ENCODE measurements at regions of chr3 and their contacts with region 1.

Region 1: DNA sequence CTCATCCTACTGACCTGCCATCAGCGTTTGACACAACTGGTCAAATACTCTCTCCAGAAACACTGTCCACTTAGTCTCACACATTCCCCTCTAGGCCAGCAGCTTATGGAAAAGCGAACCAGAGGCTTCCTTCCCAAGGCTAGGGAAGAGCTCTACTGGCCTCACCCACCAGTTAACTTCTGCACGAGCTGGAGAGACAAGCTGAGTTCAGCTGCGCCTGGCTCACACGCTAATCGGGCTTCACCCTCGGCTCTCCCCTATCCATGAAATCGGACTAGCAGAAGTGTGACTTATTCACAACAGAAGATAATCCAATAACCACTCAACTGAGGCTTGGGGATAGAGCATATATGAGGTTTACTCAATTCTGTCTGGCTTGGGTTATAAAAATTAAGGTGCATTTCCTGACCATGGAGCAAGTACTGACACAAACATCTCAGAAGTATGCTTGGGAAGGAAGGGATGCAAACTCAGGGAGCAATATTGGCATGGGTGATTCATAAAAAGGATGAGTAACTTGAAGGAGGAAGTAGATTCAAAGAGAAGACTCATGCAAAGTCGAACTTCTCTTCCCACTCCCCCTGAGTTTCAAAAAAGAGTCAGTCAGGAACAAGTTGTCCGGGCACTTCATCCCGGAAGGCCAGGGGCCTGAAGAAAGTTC is 73.1 kb downstream of the XXYLT1 start:
- DNase-seq: peak; percentile 90
- ATAC-seq: peak; percentile 71
- H3K4me3 ChIP-seq: no peak overlapping the region
- H3K27ac ChIP-seq: peak overlapping the region; percentile 64
- H3K4me1 ChIP-seq: peaks cover 20% of the 10 kb centered on the region
- H3K27me3 ChIP-seq: no peaks in the 10 kb centered on the region
- CTCF ChIP-seq: no peak
- POLR2A ChIP-seq: no peak
- RAD21 ChIP-seq: no peak

Region 2: GRCh38 chr3:194617827-194618226 is 580.1 kb before region 1 on chr3:
- CTCF ChIA-PET with region 1: no interaction called
- POLR2A ChIA-PET with region 1: no interaction called
- dilution Hi-C with region 1: no loop called
- in situ Hi-C with region 1: no loop called
- intact Hi-C with region 1: no loop called
- DNase-seq: peak; percentile 53
- ATAC-seq: no peak
- H3K4me3 ChIP-seq: no peak overlapping the region
- H3K27ac ChIP-seq: no peak overlapping the region
- H3K4me1 ChIP-seq: peaks cover 5% of the 10 kb centered on the region; the same call in 1 of the 2 replicates
- H3K27me3 ChIP-seq: no peaks in the 10 kb centered on the region
- CTCF ChIP-seq: no peak
- POLR2A ChIP-seq: no peak
- RAD21 ChIP-seq: no peak

Region 3: DNA sequence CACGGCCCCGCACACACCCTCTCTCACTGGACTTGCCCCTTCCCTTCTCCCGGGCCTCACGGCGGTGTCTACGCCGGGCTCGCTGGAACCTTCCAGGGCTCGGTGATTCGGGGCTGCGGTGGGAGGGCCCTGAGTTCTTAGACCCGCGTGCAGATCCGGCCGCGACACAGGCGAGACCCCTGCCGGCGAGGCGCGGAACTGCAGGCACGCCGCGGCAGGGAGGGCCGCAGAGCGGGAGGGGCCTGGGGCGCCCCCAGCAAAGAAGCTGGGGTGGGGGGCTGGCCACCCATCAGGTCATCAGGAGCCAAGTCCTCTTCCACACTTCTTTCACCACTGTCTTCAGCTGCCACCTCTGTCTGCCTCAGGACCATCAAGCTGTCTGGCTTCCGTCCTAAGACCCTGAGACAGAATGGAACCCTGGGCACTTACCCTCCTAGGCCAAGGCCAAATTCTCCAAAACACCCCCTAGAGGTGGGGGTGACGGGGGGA is 91.4 kb before region 1 on chr3:
- CTCF ChIA-PET with region 1: no interaction called
- POLR2A ChIA-PET with region 1: no interaction called
- dilution Hi-C with region 1: no loop called
- in situ Hi-C with region 1: no loop called
- intact Hi-C with region 1: loop called (anchors 5 kb)
- DNase-seq: peak; percentile 52
- ATAC-seq: peak; percentile 91
- H3K4me3 ChIP-seq: no peak overlapping the region
- H3K27ac ChIP-seq: peak overlapping the region; percentile 29; the same call in 1 of the 2 replicates
- H3K4me1 ChIP-seq: peaks cover 10% of the 10 kb centered on the region
- H3K27me3 ChIP-seq: no peaks in the 10 kb centered on the region
- CTCF ChIP-seq: peak; percentile 89
- POLR2A ChIP-seq: no peak
- RAD21 ChIP-seq: peak; percentile 87